ENCODE measurements at regions of chr2 and their contacts with region 1.

Region 1: GRCh38 chr2:216687646-216688045 is 7.7 kb downstream of the IGFBP5 start:
- DNase-seq: peak in 1 of 2 donors; percentile 76
- ATAC-seq: no peak
- H3K4me3 ChIP-seq: no peak overlapping the region
- H3K27ac ChIP-seq: peak overlapping the region in 1 of 2 donors; percentile 29
- H3K4me1 ChIP-seq: peaks cover 0 to 4% of the 10 kb centered on the region in 2 donors
- H3K27me3 ChIP-seq: no peaks in the 10 kb centered on the region

Region 2: GRCh38 chr2:216752855-216753505 is 65.3 kb after region 1 on chr2:
- intact Hi-C with region 1: no loop called
- DNase-seq: no peak
- ATAC-seq: no peak
- H3K4me3 ChIP-seq: no peak overlapping the region
- H3K27ac ChIP-seq: no peak overlapping the region
- H3K4me1 ChIP-seq: no peaks in the 10 kb centered on the region
- H3K27me3 ChIP-seq: no peaks in the 10 kb centered on the region

Region 3: DNA sequence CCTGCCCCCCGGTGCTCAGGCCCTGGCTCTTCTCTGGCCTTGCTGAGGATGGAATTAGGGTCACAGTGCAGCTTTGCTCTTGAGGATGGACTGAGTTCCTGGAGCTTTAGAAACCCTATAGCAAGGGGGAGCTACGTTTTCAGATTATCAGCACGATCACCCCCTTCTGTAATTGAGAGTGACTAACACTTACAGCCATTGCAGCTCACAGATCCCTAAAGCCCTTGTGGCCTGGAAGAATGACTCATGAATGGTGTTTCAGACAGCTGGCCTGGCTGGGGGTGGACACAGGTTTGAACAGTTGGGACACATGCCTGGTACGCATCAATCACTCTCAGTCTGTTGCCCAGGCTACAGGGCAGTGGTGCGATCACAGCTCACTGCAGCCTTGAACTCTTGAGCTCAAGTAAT is 87.4 kb after region 1 on chr2:
- intact Hi-C with region 1: no loop called
- DNase-seq: peak; percentile 81 to 88
- ATAC-seq: peak; percentile 77
- H3K4me3 ChIP-seq: no peak overlapping the region
- H3K27ac ChIP-seq: peak overlapping the region; percentile 59 to 85
- H3K4me1 ChIP-seq: no peaks in the 10 kb centered on the region
- H3K27me3 ChIP-seq: no peaks in the 10 kb centered on the region

Region 4: GRCh38 chr2:217713395-217714286 is 1026.0 kb after region 1 on chr2:
- intact Hi-C with region 1: loop called in 1 of 2 experiments (anchors 5 kb)
- DNase-seq: peak; percentile 85 to 93
- ATAC-seq: peak; percentile 93
- H3K4me3 ChIP-seq: no peak overlapping the region
- H3K27ac ChIP-seq: peak overlapping the region in 1 of 2 donors; percentile 29
- H3K4me1 ChIP-seq: peaks cover 0 to 2% of the 10 kb centered on the region in 2 donors
- H3K27me3 ChIP-seq: no peaks in the 10 kb centered on the region

Region 5: DNA sequence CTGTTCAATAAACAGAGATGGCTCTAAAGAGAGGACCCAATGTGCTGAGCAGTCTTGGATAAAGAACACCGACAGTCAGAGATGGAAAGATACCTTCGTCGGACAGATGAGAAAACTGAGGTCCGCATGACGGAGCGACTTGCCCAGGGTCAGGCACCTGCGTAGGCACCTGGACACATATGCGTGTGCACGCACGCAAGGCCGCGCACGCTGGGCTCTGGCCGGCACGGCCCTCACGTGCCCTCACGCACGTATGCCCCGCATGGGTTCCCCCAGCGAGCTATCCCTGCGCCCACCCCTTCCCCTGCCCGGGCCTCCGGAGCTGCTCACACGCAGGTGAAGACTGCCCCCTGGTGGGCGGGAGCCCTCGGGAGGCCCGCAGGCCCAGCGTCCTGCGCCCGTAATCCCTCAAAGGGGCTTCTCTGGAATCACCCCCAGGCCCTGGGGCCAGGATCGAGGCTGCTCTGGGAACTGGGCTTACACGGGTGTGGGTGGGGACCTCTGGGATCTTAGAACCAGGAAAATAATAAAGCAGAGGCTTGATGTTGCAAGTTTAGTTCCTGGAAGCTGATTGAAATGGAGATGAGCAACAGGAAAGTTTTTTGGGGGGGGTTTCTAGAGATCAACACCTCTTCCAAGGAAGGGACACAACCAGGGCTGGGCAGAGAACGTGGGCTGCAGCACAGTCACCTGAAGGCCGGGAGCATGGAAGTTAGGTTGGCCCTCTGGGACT is 1068.9 kb after region 1 on chr2:
- intact Hi-C with region 1: loop called in 1 of 2 experiments (anchors 5 kb)
- DNase-seq: peak; percentile 84 to 94
- ATAC-seq: peak; percentile 89
- H3K4me3 ChIP-seq: no peak overlapping the region
- H3K27ac ChIP-seq: peak overlapping the region; percentile 24 to 30
- H3K4me1 ChIP-seq: peaks cover 3 to 6% of the 10 kb centered on the region in 2 donors
- H3K27me3 ChIP-seq: no peaks in the 10 kb centered on the region